ENCODE measurements at regions of chr1 and their contacts with region 1.

Region 1: DNA sequence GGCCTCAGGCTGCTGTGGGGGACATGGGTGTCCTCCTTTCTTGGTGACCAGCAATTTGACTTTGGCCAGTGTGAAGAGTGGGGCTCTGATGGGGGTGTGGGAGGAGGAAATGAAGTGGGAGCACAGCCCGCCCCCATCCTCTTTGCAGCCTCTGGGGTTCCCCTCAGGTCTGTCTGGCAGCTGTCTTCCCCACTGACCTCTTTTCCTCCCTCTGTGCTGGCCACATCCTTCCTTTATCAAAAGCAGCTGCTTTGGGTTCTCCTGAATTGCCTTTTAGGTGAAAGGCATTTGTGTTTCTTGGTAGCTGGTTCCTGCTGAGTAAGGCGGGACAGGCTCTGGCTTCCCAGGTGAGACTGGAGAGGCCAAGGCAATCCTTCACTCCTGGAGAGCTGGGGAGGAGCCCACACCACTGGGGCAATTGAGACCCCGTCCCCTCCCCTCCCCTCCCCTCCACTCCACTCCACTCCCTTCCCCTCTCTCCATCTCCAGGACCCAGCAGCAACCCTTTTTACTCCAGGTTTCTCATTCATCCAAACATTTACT is 24.9 kb downstream of the PCAT6 start:
- DNase-seq: peak; percentile 53
- H3K4me3 Mint-ChIP-seq: peak overlapping the region; percentile 63
- H3K27ac Mint-ChIP-seq: peak overlapping the region; percentile 82
- H3K4me1 Mint-ChIP-seq: peaks cover 71% of the 10 kb centered on the region
- H3K27me3 Mint-ChIP-seq: no peaks in the 10 kb centered on the region

Region 2: GRCh38 chr1:202750758-202751157 is 84.9 kb before region 1 on chr1:
- intact Hi-C with region 1: no loop called
- DNase-seq: no peak
- H3K4me3 Mint-ChIP-seq: no peak overlapping the region
- H3K27ac Mint-ChIP-seq: no peak overlapping the region
- H3K4me1 Mint-ChIP-seq: no peaks in the 10 kb centered on the region
- H3K27me3 Mint-ChIP-seq: no peaks in the 10 kb centered on the region

Region 3: GRCh38 chr1:202802998-202803932 is 32.4 kb before region 1 on chr1:
- intact Hi-C with region 1: loop called (anchors 5 kb)
- DNase-seq: no peak
- H3K4me3 Mint-ChIP-seq: peak overlapping the region; percentile 2
- H3K27ac Mint-ChIP-seq: peak overlapping the region; percentile 40
- H3K4me1 Mint-ChIP-seq: peaks cover 63% of the 10 kb centered on the region
- H3K27me3 Mint-ChIP-seq: no peaks in the 10 kb centered on the region

Region 4: DNA sequence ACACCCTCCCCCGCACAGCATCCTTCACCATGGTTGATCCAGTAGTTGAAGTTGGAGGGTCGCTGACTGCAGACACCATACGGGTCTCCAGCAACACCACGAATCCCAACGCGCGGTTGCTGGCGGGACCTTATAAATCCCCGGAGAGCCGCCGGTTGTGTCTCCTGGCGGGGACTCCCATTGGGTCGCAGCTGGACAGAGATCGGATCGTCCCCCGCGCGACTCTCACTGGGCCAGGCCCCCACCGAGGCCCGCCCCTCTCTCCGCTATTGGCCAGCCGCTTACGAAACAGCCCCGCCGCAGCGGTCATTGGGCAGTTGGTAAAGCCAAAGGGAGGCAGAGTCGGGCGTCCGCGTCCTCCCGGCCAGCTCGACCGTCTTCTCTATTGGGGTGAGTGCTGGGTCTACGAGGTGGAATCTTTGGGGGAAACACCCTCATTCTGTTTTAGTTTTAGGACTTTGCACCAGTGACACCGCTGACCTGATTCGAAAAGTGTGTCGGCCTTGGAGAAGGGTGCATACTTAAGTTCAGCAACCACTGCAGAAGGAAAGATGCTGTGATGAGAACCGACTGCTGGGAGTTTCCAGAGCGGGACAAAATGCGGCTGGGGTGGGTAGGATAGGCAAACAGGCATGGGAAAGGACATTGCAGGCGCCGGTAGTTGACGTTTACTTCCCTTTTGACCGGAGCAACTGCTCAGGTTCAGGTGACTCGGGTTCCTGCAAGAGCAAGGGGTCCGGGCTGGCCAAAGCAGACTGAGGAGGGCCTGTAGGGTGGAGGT is 26.0 kb after region 1 on chr1:
- intact Hi-C with region 1: loop called (anchors 2 kb)
- DNase-seq: peak; percentile 60
- H3K4me3 Mint-ChIP-seq: peak overlapping the region; percentile 87
- H3K27ac Mint-ChIP-seq: no peak overlapping the region
- H3K4me1 Mint-ChIP-seq: peaks cover 21% of the 10 kb centered on the region
- H3K27me3 Mint-ChIP-seq: peaks cover 65% of the 10 kb centered on the region

Measured in activated T-helper 1 cell treated with anti-CD3 and anti-CD28 coated beads, Interleukin-12 subunit alpha, Interleukin-12 subunit beta, Interleukin-2, Interleukin-4 antibody, amounts not matched to agents 30 ng/mL and 10 ng/mL and 1 ng/mL, durations not matched to agents 14 hours and 24 hours and 36 hours (primary cell).